ENCODE measurements at regions of chr7 and their contacts with region 1.

Region 1: DNA sequence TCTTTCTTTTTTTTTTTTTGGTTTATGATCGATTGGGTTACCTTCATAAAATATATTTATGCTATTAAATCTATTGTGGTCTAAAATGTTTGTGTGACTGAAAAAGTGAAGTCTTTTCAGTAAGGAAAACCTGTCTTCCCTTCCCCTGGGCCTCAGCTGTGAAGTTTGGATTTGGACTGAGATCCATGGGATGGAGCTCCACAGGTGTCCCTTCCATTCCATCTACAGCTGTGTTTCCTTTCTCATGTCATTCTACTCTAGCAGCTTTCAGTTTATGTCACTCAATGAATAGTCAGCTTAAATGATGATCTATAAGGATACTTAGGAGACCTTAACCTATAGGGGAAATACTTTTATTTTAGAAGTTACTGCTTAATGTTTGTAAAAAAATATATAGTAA is 48.0 kb upstream of the NCF1 start:
- DNase-seq: no peak
- ATAC-seq: peak in 1 of 4 donors; percentile 38
- H3K4me3 ChIP-seq: no peak overlapping the region
- H3K27ac ChIP-seq: peak overlapping the region; percentile 67
- H3K4me1 ChIP-seq: peaks cover 23% of the 10 kb centered on the region
- H3K27me3 ChIP-seq: no peaks in the 10 kb centered on the region
- CTCF ChIP-seq: no peak

Region 2: DNA sequence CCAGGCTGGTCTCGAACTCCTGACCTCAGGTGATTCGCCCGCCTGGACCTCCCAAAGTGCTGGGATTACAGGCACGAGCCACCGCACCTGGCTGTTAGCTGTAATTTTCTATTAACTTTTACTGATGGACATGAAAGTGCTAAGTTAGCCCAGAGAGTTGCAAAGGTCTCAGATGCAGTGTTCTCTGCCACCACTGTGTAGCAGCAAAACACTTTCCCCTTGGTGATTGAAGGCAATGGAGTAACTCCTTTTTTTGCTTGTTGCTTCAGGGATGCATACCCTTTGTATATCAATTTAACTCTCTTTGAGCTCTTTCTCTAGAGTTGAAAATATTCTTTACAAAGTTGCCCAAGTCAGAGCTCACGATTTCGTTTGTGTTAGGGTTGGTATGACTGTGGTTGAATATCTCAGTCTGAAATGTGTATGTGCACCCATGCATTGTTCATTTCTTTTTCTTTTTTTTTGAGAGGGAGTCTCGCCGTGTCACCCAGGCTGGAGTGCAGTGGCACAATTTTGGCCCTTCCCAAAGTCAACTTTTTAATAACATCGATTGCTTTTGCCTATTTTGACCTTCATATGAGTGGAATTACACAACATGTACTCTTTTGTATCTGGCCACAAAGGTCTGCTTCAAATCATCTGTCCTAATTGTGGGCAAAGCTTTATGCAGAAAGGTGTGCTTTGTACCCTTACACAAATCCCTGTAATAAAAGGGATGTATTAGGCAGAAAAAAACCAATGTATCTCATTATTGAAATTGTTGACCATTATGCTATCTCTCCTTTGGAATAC is 15.8 kb before region 1 on chr7:
- intact Hi-C with region 1: loop called in 1 of 2 experiments (anchors 2 kb)
- DNase-seq: no peak
- ATAC-seq: no peak
- H3K4me3 ChIP-seq: no peak overlapping the region
- H3K27ac ChIP-seq: no peak overlapping the region
- H3K4me1 ChIP-seq: no peaks in the 10 kb centered on the region
- H3K27me3 ChIP-seq: no peaks in the 10 kb centered on the region
- CTCF ChIP-seq: no peak

Region 3: GRCh38 chr7:75608451-75609122 is 882.7 kb after region 1 on chr7:
- intact Hi-C with region 1: no loop called
- DNase-seq: no peak
- ATAC-seq: no peak
- H3K4me3 ChIP-seq: no peak overlapping the region
- H3K27ac ChIP-seq: no peak overlapping the region
- H3K4me1 ChIP-seq: peaks cover 4% of the 10 kb centered on the region
- H3K27me3 ChIP-seq: no peaks in the 10 kb centered on the region
- CTCF ChIP-seq: no peak